ENCODE measurements at regions of chr5 and their contacts with region 1.

Region 1: GRCh38 chr5:113147101-113147508 is 170.5 kb downstream of the DCP2 start:
- DNase-seq: peak; percentile 99
- ATAC-seq: peak; percentile 80
- H3K4me3 ChIP-seq: no peak overlapping the region
- H3K27ac ChIP-seq: peak overlapping the region; percentile 89; the same call in 1 of the 2 replicates
- H3K4me1 ChIP-seq: peaks cover 25% of the 10 kb centered on the region
- H3K27me3 ChIP-seq: no peaks in the 10 kb centered on the region
- CTCF ChIP-seq: no peak
- POLR2A ChIP-seq: no peak
- RAD21 ChIP-seq: peak; percentile 16; the same call in 1 of the 2 replicates

Region 2: GRCh38 chr5:113166852-113167366 is 19.8 kb after region 1 on chr5:
- CTCF ChIA-PET with region 1: interaction called, 3 read pairs
- POLR2A ChIA-PET with region 1: no interaction called
- dilution Hi-C with region 1: no loop called
- in situ Hi-C with region 1: no loop called
- intact Hi-C with region 1: loop called (anchors 1 kb)
- DNase-seq: peak; percentile 89
- ATAC-seq: peak; percentile 47
- H3K4me3 ChIP-seq: no peak overlapping the region
- H3K27ac ChIP-seq: peak overlapping the region; percentile 85
- H3K4me1 ChIP-seq: peaks cover 26% of the 10 kb centered on the region
- H3K27me3 ChIP-seq: no peaks in the 10 kb centered on the region
- CTCF ChIP-seq: no peak
- POLR2A ChIP-seq: no peak
- RAD21 ChIP-seq: peak; percentile 12; the same call in 1 of the 2 replicates

Region 3: DNA sequence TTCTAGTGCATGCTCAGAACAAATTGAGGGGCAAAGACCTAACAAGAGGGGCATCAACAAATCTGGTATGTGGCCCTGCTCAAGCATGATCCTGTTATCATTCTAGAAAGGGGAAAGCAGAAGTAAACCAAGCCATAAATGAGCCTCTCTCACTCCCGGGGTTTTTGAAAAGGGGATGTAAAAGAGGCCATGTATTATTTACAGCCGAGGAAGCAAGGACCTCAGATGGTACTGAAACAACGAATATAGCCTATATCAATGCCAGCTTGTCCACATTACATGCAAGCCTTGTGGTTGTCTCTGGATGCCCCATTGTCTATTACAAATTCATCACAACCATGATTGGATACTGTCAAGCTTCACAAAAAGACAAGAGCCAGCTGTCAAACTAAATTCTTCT is 40.8 kb after region 1 on chr5:
- CTCF ChIA-PET with region 1: no interaction called
- POLR2A ChIA-PET with region 1: no interaction called
- dilution Hi-C with region 1: no loop called
- in situ Hi-C with region 1: no loop called
- intact Hi-C with region 1: no loop called
- DNase-seq: no peak
- ATAC-seq: no peak
- H3K4me3 ChIP-seq: no peak overlapping the region
- H3K27ac ChIP-seq: no peak overlapping the region
- H3K4me1 ChIP-seq: peaks cover 2% of the 10 kb centered on the region; the same call in 1 of the 2 replicates
- H3K27me3 ChIP-seq: no peaks in the 10 kb centered on the region
- CTCF ChIP-seq: no peak
- POLR2A ChIP-seq: no peak
- RAD21 ChIP-seq: no peak

Region 4: DNA sequence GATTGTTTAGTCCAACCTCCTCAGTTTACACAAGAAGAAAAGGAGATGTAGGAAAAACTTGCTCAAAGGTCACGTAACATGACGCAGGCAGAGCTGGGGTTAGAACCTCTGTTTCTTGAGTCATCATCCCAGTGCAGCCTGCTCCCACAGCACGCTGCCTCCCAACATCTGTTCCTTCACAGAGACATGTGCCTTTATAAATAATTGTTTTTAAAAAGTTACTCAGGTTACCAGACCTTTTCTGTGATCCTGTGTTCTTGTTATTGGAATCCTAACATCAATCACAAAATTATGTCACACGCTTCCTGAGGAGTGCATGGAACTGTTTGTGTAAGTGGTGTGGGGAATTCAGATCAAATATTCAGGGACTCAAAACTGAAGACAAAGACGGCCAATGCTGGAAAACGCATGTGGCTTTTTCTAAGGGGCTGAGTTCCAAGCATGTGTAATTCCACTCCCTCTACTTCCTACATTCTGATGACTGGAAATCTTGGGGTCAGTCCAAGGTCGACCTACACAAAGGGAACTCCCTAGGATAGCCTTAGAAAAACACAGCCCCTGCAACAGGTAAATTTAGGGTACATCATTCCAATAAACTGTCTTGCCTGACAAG is 103.3 kb after region 1 on chr5:
- CTCF ChIA-PET with region 1: no interaction called
- POLR2A ChIA-PET with region 1: no interaction called
- dilution Hi-C with region 1: no loop called
- in situ Hi-C with region 1: no loop called
- intact Hi-C with region 1: loop called (anchors 5 kb)
- DNase-seq: peak; percentile 100
- ATAC-seq: peak; percentile 90
- H3K4me3 ChIP-seq: no peak overlapping the region
- H3K27ac ChIP-seq: peak overlapping the region; percentile 35; the same call in 1 of the 2 replicates
- H3K4me1 ChIP-seq: peaks cover 24% of the 10 kb centered on the region
- H3K27me3 ChIP-seq: no peaks in the 10 kb centered on the region
- CTCF ChIP-seq: no peak
- POLR2A ChIP-seq: no peak; the same call in none of the 2 replicates
- RAD21 ChIP-seq: peak; percentile 28

Measured in IMR-90 (cell line).